RWPE1 (cell line): ENCODE measurements at regions of chr6 and their contacts with region 1.

Region 1: GRCh38 chr6:135014353-135014832 is 40.2 kb downstream of the HBS1L start:
- DNase-seq: no peak
- H3K27ac ChIP-seq: no peak overlapping the region
- CTCF ChIP-seq: no peak

Region 2: DNA sequence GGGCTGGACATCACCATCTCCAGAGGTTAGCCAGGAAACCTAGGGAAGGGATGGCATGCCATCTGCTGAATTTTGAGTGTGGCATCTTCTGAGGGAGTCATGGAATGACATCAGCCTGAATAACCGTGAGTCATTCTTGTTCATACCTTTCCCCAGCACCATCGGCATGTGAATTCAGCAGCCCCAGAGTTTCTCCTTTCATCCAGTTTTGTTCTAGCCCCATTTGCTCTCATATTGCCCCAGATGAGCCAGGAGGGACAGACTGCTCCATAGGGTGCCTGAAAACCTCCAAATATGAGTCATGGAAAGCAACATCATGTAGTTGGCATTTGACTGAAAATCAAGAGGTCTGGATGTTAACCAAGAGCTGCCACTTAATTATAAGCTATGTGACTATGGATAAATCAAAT is 477.2 kb before region 1 on chr6:
- CTCF ChIA-PET with region 1: no interaction called
- POLR2A ChIA-PET with region 1: no interaction called
- DNase-seq: peak; percentile 94
- H3K27ac ChIP-seq: peak overlapping the region; percentile 88
- CTCF ChIP-seq: no peak

Region 3: DNA sequence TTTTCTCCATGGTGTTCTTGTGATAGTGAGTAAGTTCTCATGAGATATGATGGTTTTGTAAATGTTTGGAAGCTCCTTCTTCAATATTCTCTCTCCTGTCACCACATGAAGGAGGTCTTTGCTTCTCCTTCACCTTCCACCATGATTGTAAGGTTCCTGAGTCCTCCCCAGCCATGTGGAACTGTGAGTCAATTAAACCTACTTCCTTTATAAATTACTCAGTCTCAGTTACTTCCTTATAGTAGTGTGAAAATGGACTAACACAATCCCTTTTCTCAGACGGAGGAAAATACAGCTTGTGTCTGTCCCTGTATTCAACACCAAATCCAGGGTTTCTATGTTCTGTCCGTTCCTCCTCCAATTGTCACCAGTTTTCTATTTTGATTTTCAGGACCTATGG is 245.5 kb before region 1 on chr6:
- CTCF ChIA-PET with region 1: no interaction called
- POLR2A ChIA-PET with region 1: no interaction called
- DNase-seq: no peak
- H3K27ac ChIP-seq: no peak overlapping the region
- CTCF ChIP-seq: no peak

Region 4: DNA sequence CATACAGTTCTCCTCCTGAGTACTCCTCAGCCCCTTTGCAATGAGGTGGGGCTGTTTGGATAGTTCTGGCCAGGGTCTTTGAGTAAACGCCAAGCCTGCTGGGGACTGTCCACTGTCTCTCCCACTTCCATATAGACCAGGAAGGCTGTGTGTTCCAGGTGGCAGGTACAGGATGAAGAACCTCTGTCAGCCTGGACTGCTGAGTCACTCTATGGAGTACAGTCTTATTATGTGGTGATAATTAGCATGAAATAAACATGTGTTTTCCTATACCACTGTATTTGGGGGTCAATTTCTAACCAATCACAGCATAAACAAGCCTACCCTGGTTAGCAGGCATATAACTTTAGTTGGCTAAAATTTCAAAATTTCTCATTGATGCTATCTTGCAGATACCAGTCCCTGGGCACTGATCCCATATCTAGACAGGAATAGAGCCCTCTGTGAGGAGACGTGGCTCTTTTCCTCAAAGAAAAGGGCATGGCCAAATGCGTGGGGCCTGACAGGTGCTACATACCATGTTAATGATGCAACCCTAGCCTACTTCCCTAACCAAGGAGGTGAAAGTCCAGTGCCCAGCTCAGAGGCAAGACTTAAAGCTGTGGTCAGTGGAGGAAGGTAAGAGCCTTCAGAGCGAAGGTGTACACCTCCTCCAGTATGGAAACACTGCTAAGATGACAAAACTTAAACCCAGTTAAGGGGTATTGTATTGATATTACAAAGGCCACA is 60.0 kb before region 1 on chr6:
- CTCF ChIA-PET with region 1: no interaction called
- POLR2A ChIA-PET with region 1: no interaction called
- DNase-seq: no peak
- H3K27ac ChIP-seq: no peak overlapping the region
- CTCF ChIP-seq: no peak

Region 5: GRCh38 chr6:135044639-135045038 is 30.2 kb after region 1 on chr6:
- CTCF ChIA-PET with region 1: no interaction called
- POLR2A ChIA-PET with region 1: no interaction called
- DNase-seq: no peak
- H3K27ac ChIP-seq: no peak overlapping the region
- CTCF ChIP-seq: no peak

Region 6: DNA sequence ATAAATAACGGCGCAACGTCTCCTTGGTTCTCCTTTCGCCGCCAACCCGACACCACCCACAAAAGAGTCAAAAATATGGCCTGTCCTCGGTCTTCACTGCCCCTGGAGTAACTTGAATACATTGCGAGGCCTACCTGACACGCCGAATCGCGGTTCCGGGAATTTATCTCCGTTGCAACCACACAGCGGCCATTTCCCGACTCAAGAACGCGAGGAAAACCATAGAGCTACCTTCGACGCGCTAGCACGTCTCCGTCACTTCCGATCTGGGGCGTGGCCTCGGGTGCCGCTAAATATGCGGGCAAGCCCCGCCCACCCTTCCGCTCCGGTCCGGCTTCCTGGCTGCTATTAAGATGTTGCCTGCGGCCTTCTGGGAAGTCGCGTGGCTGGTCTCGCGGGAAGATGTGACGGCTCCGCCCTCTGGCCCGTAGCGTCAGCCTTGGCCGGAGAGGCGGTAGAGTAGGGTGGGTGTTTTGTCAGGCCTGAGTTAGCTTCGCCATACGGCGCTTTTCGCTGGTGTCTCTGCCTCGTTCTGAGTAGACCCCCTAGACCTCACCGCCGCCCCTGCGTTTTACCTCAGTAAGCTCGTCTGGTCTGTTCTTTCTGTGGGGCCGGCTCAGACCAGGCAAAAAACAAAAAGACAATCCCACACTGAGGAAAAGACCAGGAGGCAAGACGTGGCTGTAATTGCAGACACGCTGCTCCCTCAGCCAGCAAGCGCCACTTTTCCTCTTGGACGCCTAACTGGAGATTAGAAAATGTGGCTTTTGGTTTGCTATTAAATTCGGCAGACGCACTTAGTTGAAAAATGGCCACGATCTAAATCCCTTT is 1275.4 kb after region 1 on chr6 and contains the start of gene BCLAF1:
- CTCF ChIA-PET with region 1: no interaction called
- POLR2A ChIA-PET with region 1: interaction called, 13 read pairs
- DNase-seq: peak; percentile 95
- H3K27ac ChIP-seq: peak within 1 kb of the TSS; percentile 97
- CTCF ChIP-seq: no peak